K562 (cell line): ENCODE measurements at regions of chr10 and their contacts with region 1.

Region 1: DNA sequence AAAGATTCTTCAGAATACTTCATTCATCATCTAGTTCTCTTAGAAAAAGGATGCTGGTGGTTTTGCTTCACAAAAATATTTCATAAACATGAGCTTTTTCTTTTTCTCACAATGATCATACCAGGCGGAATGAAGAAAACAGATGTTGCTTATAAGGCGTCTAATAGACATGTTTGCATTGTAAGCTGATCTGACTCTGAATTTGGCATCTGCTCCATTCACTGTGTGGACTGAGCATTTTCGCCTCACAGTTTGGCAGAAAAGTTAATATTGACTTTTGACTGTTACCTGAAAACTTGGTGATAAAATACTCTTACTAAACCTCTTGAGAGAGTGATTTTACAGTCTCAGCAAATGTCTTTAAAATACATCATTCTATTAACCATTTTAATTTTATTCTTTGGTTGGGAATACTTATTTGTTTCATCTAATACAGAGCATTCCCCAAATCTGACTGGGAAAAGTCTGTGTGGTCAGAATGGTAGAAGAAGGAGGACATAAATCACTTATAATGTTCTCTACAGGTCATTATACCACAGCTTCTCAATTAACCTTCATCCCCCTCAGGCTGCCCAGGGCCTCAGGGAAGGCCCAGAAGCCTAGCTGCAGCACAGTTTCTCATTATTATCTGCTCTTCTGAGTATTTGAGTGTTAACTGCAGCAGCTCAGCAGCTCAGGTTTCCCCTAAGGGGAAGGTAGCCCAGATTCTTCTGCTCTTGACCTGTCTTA is 121.6 kb upstream of the KAT6B start:
- DNase-seq: no peak
- ATAC-seq: no peak
- H3K4me3 ChIP-seq: no peak overlapping the region
- H3K27ac ChIP-seq: no peak overlapping the region
- H3K4me1 ChIP-seq: no peaks in the 10 kb centered on the region
- H3K27me3 ChIP-seq: no peaks in the 10 kb centered on the region
- CTCF ChIP-seq: no peak
- EP300 ChIP-seq: no peak
- POLR2A ChIP-seq: no peak
- RAD21 ChIP-seq: no peak

Region 2: DNA sequence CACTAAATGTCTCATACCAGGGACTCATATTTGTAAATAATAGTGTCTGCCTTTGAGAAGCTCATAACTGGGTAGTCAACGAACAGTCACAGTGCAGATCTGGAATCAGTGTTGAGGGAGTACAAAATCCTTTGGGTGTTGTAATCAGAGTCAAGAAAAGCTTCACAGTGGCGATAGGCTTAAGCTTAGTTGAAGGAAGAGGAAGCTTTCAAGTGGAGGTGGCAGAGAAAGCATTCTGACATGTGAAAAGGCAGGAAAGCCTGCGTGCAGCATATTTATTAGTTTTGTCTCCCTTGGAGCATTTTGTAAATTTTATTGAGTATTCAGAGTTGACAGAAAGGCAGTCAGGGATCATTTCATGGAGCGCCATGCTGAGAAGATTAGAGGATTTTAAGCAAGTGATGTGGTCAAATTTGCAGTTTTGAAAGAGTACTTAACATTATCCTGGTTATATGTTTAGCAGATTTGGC is 448.9 kb before region 1 on chr10:
- CTCF ChIA-PET with region 1: no interaction called
- POLR2A ChIA-PET with region 1: no interaction called
- in situ Hi-C with region 1: loop called (anchors 10 kb)
- intact Hi-C with region 1: no loop called
- DNase-seq: no peak
- ATAC-seq: peak; percentile 52
- H3K4me3 ChIP-seq: no peak overlapping the region
- H3K27ac ChIP-seq: no peak overlapping the region
- H3K4me1 ChIP-seq: peaks cover 0 to 4% of the 10 kb centered on the region in 2 experiments; a peak in 1 of 5 replicates
- H3K27me3 ChIP-seq: no peaks in the 10 kb centered on the region
- CTCF ChIP-seq: no peak
- EP300 ChIP-seq: no peak
- POLR2A ChIP-seq: no peak
- RAD21 ChIP-seq: no peak

Region 3: DNA sequence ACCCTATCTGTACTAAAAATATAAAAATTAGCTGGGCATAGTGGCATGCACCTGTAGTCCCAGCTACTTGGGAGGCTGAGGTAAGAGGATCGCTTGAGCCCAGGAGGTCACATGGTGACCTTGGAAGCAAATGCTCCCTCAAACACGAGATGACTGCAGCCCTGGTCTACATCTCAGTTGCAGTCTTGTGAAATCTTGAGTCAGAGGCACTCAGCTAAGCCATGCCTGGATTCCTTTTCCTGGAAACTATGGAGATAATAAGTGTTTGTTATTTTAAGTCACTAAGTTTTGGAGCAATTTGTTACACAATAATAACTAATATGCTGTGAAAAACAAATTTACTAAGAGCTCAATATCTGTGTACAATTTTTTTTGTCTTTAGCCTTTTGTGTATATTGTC is 162.7 kb before region 1 on chr10:
- CTCF ChIA-PET with region 1: no interaction called
- POLR2A ChIA-PET with region 1: no interaction called
- in situ Hi-C with region 1: no loop called
- intact Hi-C with region 1: no loop called
- DNase-seq: no peak
- ATAC-seq: no peak
- H3K4me3 ChIP-seq: no peak overlapping the region
- H3K27ac ChIP-seq: no peak overlapping the region
- H3K4me1 ChIP-seq: no peaks in the 10 kb centered on the region
- H3K27me3 ChIP-seq: no peaks in the 10 kb centered on the region
- CTCF ChIP-seq: no peak
- EP300 ChIP-seq: no peak
- POLR2A ChIP-seq: no peak
- RAD21 ChIP-seq: no peak

Region 4: GRCh38 chr10:74602576-74602975 is 102.2 kb before region 1 on chr10:
- CTCF ChIA-PET with region 1: no interaction called
- POLR2A ChIA-PET with region 1: no interaction called
- in situ Hi-C with region 1: no loop called
- intact Hi-C with region 1: no loop called
- DNase-seq: no peak
- ATAC-seq: no peak
- H3K4me3 ChIP-seq: no peak overlapping the region
- H3K27ac ChIP-seq: no peak overlapping the region
- H3K4me1 ChIP-seq: no peaks in the 10 kb centered on the region
- H3K27me3 ChIP-seq: no peaks in the 10 kb centered on the region
- CTCF ChIP-seq: no peak
- EP300 ChIP-seq: no peak
- POLR2A ChIP-seq: no peak
- RAD21 ChIP-seq: no peak